Activated naive CD4-positive, alpha-beta T cell treated with anti-CD3 and anti-CD28 coated beads for 36 hours (primary cell): ENCODE measurements at regions of chr12 and their contacts with region 1.

Region 1: GRCh38 chr12:132327351-132328171 is 1.8 kb downstream of the GALNT9 start:
- DNase-seq: peak; percentile 89
- H3K4me3 Mint-ChIP-seq: peak overlapping the region; percentile 50
- H3K27ac Mint-ChIP-seq: peak overlapping the region; percentile 88
- H3K4me1 Mint-ChIP-seq: peaks cover 35% of the 10 kb centered on the region
- H3K27me3 Mint-ChIP-seq: peaks cover 32% of the 10 kb centered on the region

Region 2: GRCh38 chr12:132003846-132004245 is 323.7 kb before region 1 on chr12:
- CTCF ChIA-PET with region 1: no interaction called
- intact Hi-C with region 1: no loop called
- DNase-seq: no peak
- H3K4me3 Mint-ChIP-seq: no peak overlapping the region
- H3K27ac Mint-ChIP-seq: no peak overlapping the region
- H3K4me1 Mint-ChIP-seq: no peaks in the 10 kb centered on the region
- H3K27me3 Mint-ChIP-seq: no peaks in the 10 kb centered on the region

Region 3: GRCh38 chr12:132243596-132244310 is 83.8 kb before region 1 on chr12:
- CTCF ChIA-PET with region 1: no interaction called
- intact Hi-C with region 1: loop called (anchors 2 kb)
- DNase-seq: peak; percentile 19
- H3K4me3 Mint-ChIP-seq: no peak overlapping the region
- H3K27ac Mint-ChIP-seq: no peak overlapping the region
- H3K4me1 Mint-ChIP-seq: peaks cover 7% of the 10 kb centered on the region
- H3K27me3 Mint-ChIP-seq: no peaks in the 10 kb centered on the region

Region 4: GRCh38 chr12:132285991-132286681 is 41.4 kb before region 1 on chr12:
- CTCF ChIA-PET with region 1: no interaction called
- intact Hi-C with region 1: loop called (anchors 5 kb)
- DNase-seq: peak; percentile 21
- H3K4me3 Mint-ChIP-seq: no peak overlapping the region
- H3K27ac Mint-ChIP-seq: no peak overlapping the region
- H3K4me1 Mint-ChIP-seq: peaks cover 18% of the 10 kb centered on the region
- H3K27me3 Mint-ChIP-seq: peaks cover 28% of the 10 kb centered on the region